Sigmoid colon (tissue), 7 donors: ENCODE measurements at regions of chr16 and their contacts with region 1.

Region 1: GRCh38 chr16:70653809-70654771 is 7.7 kb downstream of the IL34 start:
- DNase-seq: peak; percentile 92
- H3K4me3 ChIP-seq: peak overlapping the region in 3 of 4 donors; percentile 22 to 37 (median 26)
- H3K27ac ChIP-seq: peak overlapping the region in 3 of 4 donors; percentile 68 to 79 (median 76)
- H3K4me1 ChIP-seq: peaks cover 0 to 8% (median 6%) of the 10 kb centered on the region in 4 donors
- H3K27me3 ChIP-seq: no peaks in the 10 kb centered on the region
- CTCF ChIP-seq: peak; percentile 90 to 97 (median 96)
- EP300 ChIP-seq: no peak
- POLR2A ChIP-seq: no peak

Region 2: DNA sequence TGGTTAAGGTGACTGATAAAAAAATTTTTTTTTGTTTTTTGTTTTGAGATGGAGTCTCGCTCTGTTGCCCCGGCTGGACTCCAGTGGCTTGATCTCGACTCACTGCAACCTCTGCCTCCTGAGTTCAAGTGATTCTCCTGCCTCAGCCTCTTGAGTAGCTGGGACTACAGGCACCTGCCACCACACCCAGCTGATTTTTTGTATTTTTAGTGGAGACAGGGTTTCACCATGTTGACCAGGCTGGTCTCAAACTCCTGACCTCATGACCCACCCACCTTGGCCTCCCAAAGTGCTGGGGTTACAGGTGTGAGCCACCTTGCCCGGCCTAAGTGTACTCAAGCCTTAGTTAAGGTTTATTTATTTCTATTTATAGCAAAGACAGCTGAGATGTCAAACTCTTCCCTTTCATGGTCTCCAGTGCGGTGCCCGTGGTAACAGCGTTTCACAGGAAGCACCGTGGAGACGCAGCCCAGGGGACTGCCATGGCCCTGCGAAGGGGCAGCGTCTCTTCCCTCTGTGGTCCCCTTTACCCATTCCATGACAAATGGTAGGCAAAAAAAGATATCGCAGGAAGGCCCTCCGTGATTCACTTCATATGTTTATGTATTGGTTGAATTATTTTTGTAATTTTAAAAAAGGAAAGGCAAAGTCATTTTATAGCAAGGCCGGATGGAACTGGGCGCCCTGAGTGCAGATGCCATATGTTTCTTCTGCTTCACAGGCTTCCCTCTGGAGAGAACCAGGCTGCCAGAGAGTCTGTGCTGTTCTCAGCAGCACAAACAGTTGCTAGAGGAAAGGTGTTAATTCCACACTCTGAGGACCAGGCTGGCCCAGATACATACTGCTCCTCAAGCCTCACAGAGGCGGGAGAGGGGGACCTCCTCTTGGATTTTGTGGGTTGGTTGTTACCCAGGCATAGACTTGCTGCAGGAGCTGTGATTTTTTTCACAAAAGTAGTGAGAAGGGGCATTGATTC is 278.2 kb before region 1 on chr16:
- intact Hi-C with region 1: loop called (anchors 10 kb)
- DNase-seq: no peak
- H3K4me3 ChIP-seq: no peak overlapping the region
- H3K27ac ChIP-seq: no peak overlapping the region
- H3K4me1 ChIP-seq: peaks cover 0 to 16% (median 10%) of the 10 kb centered on the region in 4 donors
- H3K27me3 ChIP-seq: no peaks in the 10 kb centered on the region
- CTCF ChIP-seq: no peak
- EP300 ChIP-seq: no peak
- POLR2A ChIP-seq: no peak

Region 3: GRCh38 chr16:70576431-70577255 is 77.4 kb before region 1 on chr16:
- intact Hi-C with region 1: loop called (anchors 5 kb)
- DNase-seq: no peak
- H3K4me3 ChIP-seq: no peak overlapping the region
- H3K27ac ChIP-seq: peak overlapping the region; percentile 3 to 44 (median 29)
- H3K4me1 ChIP-seq: peaks cover 0 to 57% (median 43%) of the 10 kb centered on the region in 4 donors
- H3K27me3 ChIP-seq: no peaks in the 10 kb centered on the region
- CTCF ChIP-seq: no peak
- EP300 ChIP-seq: no peak
- POLR2A ChIP-seq: no peak

Region 4: DNA sequence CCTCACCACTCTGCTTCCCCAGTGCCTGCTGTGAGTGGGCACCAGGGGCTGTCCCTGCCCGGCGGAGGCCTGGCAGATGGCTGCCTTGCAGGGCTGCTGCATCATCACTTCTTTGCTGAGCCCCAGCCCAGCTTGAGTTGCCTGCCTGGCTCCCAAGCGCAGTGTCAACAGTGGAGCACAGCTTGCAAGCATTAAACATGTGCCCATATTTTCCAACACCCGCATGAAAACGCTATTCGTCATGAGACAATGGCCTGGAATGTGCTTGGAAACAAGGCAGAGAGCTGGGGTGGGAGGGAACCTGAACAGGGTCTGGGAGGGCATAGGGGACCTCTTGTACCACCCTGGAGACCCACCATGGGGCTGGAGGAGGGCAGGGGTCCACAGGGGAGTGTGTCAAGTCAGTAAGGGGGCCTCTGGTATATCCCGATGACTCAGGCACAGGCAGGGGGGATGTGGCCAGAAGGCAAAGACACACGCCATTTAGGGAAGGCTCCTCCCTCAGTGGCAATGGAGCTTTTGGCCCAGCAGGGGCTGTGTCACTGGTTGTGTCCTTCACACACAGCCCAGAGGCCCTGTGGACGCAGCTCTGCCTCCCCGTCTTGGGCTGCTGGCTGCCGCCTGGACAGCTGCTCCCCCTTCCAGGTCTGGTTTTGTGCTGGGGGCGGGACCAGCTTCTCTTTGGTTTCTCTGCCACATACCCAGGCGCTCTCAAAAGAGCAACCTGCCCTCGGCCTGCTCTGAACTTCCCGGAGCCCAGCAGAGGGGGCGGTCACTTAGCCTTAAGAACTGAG is 49.1 kb after region 1 on chr16:
- intact Hi-C with region 1: no loop called
- DNase-seq: peak; percentile 94
- H3K4me3 ChIP-seq: no peak overlapping the region
- H3K27ac ChIP-seq: peak overlapping the region; percentile 92 to 99 (median 98)
- H3K4me1 ChIP-seq: peaks cover 6 to 98% (median 94%) of the 10 kb centered on the region in 4 donors
- H3K27me3 ChIP-seq: no peaks in the 10 kb centered on the region
- CTCF ChIP-seq: peak in 3 of 4 experiments; percentile 42 to 56 (median 43)
- EP300 ChIP-seq: peak in 3 of 4 donors; percentile 89 to 96 (median 91)
- POLR2A ChIP-seq: peak in 1 of 2 donors; percentile 32